Activated CD8-positive, alpha-beta T cell treated with anti-CD3 and anti-CD28 coated beads for 36 hours (primary cell): ENCODE measurements at regions of chr9 and their contacts with region 1.

Region 1: DNA sequence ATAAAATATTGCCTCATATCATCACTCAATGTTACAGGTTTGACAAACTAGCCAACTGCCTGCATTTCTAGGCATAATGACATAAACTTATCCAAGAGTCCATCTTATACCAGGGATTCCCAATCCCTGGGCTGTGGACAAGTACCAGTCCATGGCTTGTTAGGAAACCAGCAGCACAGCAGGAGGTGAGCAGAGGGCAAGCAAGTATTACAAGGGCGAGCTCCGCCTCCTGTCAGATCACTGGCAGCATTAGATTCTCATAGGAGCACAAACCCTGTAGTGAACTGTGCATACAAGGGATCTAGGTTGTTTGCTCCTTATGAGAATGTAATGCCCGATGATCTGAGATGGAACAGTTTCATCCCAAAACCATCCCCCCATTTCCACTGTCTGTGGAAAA is 144.9 kb downstream of the PRKACG start:
- DNase-seq: no peak
- ATAC-seq: no peak
- H3K4me3 Mint-ChIP-seq: no peak overlapping the region
- H3K27ac Mint-ChIP-seq: no peak overlapping the region
- H3K4me1 Mint-ChIP-seq: no peaks in the 10 kb centered on the region
- H3K27me3 Mint-ChIP-seq: peaks cover 4% of the 10 kb centered on the region
- CTCF ChIP-seq: no peak

Region 2: GRCh38 chr9:68817079-68817875 is 51.7 kb before region 1 on chr9:
- CTCF ChIA-PET with region 1: interaction called, 3 read pairs
- POLR2A ChIA-PET with region 1: no interaction called
- intact Hi-C with region 1: loop called (anchors 5 kb)
- DNase-seq: no peak
- ATAC-seq: no peak
- H3K4me3 Mint-ChIP-seq: no peak overlapping the region
- H3K27ac Mint-ChIP-seq: no peak overlapping the region
- H3K4me1 Mint-ChIP-seq: no peaks in the 10 kb centered on the region
- H3K27me3 Mint-ChIP-seq: peaks cover 14% of the 10 kb centered on the region
- CTCF ChIP-seq: no peak

Region 3: DNA sequence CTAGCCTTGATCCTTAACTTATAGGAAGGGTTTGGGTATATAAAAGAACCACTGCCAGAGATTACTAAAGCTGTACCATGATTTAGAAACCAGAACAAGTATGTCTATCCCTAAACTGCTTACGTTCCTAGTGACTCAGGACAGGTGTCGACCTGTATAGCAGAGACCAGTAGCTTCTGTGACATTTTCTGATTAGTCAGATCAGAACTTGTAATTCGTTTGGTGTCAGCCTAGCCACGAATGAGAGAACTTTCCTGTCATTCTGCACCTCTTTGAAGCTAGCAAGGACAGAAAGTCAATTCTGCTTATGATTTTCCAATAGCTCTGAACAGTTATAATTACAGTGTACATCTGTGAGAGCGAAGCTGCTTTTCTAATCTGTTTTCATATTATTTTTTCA is 105.4 kb after region 1 on chr9:
- CTCF ChIA-PET with region 1: no interaction called
- POLR2A ChIA-PET with region 1: no interaction called
- intact Hi-C with region 1: no loop called
- DNase-seq: peak; percentile 52
- ATAC-seq: peak; percentile 96
- H3K4me3 Mint-ChIP-seq: no peak overlapping the region
- H3K27ac Mint-ChIP-seq: peak overlapping the region; percentile 73
- H3K4me1 Mint-ChIP-seq: peaks cover 27% of the 10 kb centered on the region
- H3K27me3 Mint-ChIP-seq: peaks cover 10% of the 10 kb centered on the region
- CTCF ChIP-seq: no peak